Activated naive CD4-positive, alpha-beta T cell treated with anti-CD3 and anti-CD28 coated beads, Interleukin-2, amount 10 ng/mL, durations not matched to agents 7 days and 5 days (primary cell): ENCODE measurements at regions of chr9 and their contacts with region 1.

Region 1: GRCh38 chr9:32378993-32379729 is 5.3 kb upstream of the ACO1 start:
- DNase-seq: peak; percentile 66
- H3K4me3 Mint-ChIP-seq: no peak overlapping the region
- H3K27ac Mint-ChIP-seq: no peak overlapping the region
- H3K4me1 Mint-ChIP-seq: peaks cover 16% of the 10 kb centered on the region
- H3K27me3 Mint-ChIP-seq: peaks cover 41% of the 10 kb centered on the region

Region 2: DNA sequence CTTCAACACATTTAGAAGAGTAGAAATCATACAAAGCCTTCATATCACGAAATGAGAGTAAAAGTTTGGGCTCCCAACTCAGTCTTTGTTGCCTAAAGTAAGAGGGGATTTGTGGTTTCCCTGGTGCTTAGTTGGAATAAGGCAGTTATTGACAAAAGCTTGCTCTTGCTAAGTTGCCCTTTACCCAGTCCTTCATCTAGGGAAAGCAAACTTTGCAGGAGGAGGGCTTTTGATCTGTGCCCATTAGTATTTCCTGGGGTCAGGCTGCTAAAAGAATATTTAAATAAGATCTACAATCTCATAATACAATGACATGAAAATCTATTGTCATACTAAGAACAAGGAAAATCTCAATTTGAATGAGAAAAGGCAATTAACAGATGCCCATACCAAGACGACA is 78.8 kb before region 1 on chr9:
- CTCF ChIA-PET with region 1: no interaction called
- DNase-seq: no peak
- H3K4me3 Mint-ChIP-seq: no peak overlapping the region
- H3K27ac Mint-ChIP-seq: no peak overlapping the region
- H3K4me1 Mint-ChIP-seq: no peaks in the 10 kb centered on the region
- H3K27me3 Mint-ChIP-seq: peaks cover 4% of the 10 kb centered on the region

Region 3: GRCh38 chr9:32326146-32326545 is 53.0 kb before region 1 on chr9:
- CTCF ChIA-PET with region 1: no interaction called
- DNase-seq: no peak
- H3K4me3 Mint-ChIP-seq: no peak overlapping the region
- H3K27ac Mint-ChIP-seq: no peak overlapping the region
- H3K4me1 Mint-ChIP-seq: no peaks in the 10 kb centered on the region
- H3K27me3 Mint-ChIP-seq: no peaks in the 10 kb centered on the region

Region 4: GRCh38 chr9:32339424-32339823 is 39.7 kb before region 1 on chr9:
- CTCF ChIA-PET with region 1: no interaction called
- DNase-seq: no peak
- H3K4me3 Mint-ChIP-seq: no peak overlapping the region
- H3K27ac Mint-ChIP-seq: no peak overlapping the region
- H3K4me1 Mint-ChIP-seq: peaks cover 3% of the 10 kb centered on the region
- H3K27me3 Mint-ChIP-seq: no peaks in the 10 kb centered on the region

Region 5: DNA sequence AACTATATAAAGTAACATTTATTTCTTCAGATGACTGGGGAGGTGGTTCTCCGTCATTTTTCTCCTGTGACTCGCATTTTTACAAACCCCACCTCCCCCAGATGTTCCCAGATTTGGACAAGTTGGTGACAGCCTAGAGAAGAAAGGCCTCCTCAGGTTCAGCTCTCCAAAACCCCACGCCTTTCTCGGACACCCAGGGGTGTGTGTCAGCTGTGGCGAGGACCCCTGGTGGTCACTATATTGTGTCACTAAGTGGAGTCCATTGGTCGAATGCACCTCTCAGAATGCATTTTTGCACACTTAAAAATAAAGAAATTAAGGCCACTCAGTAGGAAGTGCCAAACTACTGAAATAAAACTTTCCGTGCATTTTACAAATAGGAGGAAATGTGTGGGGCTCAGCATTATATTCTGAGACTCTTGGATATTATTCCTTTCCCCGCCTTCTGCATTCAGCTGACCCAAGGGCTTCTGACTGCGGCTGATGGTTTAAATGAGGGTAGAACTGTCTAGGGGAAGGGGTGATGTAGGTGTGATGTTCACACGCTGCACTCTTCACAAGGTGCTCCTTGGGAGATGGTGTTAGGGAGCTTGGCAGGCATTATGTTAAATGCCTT is 52.9 kb after region 1 on chr9:
- CTCF ChIA-PET with region 1: interaction called, 41 read pairs
- DNase-seq: peak; percentile 44
- H3K4me3 Mint-ChIP-seq: no peak overlapping the region
- H3K27ac Mint-ChIP-seq: no peak overlapping the region
- H3K4me1 Mint-ChIP-seq: peaks cover 4% of the 10 kb centered on the region
- H3K27me3 Mint-ChIP-seq: no peaks in the 10 kb centered on the region

Region 6: GRCh38 chr9:32550562-32551433 is 171.6 kb after region 1 on chr9:
- CTCF ChIA-PET with region 1: interaction called, 20 read pairs
- DNase-seq: peak; percentile 97
- H3K4me3 Mint-ChIP-seq: peak overlapping the region; percentile 87
- H3K27ac Mint-ChIP-seq: peak overlapping the region; percentile 99
- H3K4me1 Mint-ChIP-seq: peaks cover 36% of the 10 kb centered on the region
- H3K27me3 Mint-ChIP-seq: no peaks in the 10 kb centered on the region

Region 7: GRCh38 chr9:32571969-32572899 is 193.1 kb after region 1 on chr9:
- CTCF ChIA-PET with region 1: interaction called, 421 read pairs
- DNase-seq: peak; percentile 83
- H3K4me3 Mint-ChIP-seq: peak overlapping the region; percentile 98
- H3K27ac Mint-ChIP-seq: peak overlapping the region; percentile 99
- H3K4me1 Mint-ChIP-seq: peaks cover 30% of the 10 kb centered on the region
- H3K27me3 Mint-ChIP-seq: no peaks in the 10 kb centered on the region

Region 8: GRCh38 chr9:32968101-32969011 is 589.2 kb after region 1 on chr9:
- CTCF ChIA-PET with region 1: interaction called, 19 read pairs
- DNase-seq: peak; percentile 64
- H3K4me3 Mint-ChIP-seq: no peak overlapping the region
- H3K27ac Mint-ChIP-seq: no peak overlapping the region
- H3K4me1 Mint-ChIP-seq: no peaks in the 10 kb centered on the region
- H3K27me3 Mint-ChIP-seq: no peaks in the 10 kb centered on the region